ENCODE measurements at regions of chr17 and their contacts with region 1.

Region 1: DNA sequence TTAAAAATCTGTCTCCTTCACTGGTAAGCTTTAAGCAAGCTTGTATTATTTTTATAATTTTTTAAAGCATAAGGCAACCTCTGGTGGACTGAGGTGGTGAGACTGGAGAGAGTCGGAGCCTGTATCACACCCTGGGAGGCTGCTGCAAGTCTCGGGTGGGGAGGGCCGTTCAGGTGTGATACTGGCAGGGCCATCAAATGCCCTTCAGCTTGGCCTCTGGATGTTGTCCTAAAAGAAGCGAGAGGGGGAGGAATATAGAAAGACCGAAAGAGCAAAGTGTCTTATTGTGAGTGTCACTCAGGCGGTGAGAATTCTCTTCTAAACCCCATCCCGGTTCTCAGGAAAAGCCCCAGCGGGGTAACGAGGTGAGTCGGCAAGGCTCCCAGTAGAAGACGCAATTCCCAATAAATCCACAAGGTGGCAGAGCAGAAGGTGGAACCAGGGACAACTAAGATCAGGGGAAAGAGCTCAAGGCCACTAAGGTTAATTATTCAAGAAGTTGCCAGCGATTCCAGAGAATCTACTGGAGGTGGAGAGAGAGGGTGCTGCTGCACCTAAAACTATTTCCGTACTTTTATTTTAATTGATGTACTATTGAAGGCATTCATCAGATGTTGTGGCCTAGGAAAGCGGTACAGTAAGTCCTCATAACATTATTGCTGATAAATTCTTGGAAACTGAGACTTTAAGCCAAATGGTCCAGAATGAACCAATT is 14.1 kb downstream of the C17orf67 start:
- DNase-seq: peak; percentile 70
- H3K4me3 ChIP-seq: no peak overlapping the region
- H3K27ac ChIP-seq: no peak overlapping the region
- H3K4me1 ChIP-seq: peaks cover 7% of the 10 kb centered on the region
- CTCF ChIP-seq: peak; percentile 83

Region 2: GRCh38 chr17:56939901-56940343 is 120.3 kb after region 1 on chr17:
- CTCF ChIA-PET with region 1: interaction called, 4 read pairs
- POLR2A ChIA-PET with region 1: no interaction called
- intact Hi-C with region 1: loop called (anchors 1 kb)
- DNase-seq: peak; percentile 79
- H3K4me3 ChIP-seq: no peak overlapping the region
- H3K27ac ChIP-seq: no peak overlapping the region
- H3K4me1 ChIP-seq: no peaks in the 10 kb centered on the region
- CTCF ChIP-seq: peak; percentile 87